ENCODE measurements at regions of chr12 and their contacts with region 1.

Region 1: GRCh38 chr12:31362759-31363415 is 36.9 kb upstream of the SINHCAF start:
- DNase-seq: peak; percentile 60
- ATAC-seq: peak; percentile 80
- H3K4me3 ChIP-seq: peak overlapping the region in 2 of 5 experiments; percentile 19 to 25
- H3K4me3 Mint-ChIP-seq: peak overlapping the region; percentile 59
- H3K27ac ChIP-seq: peak overlapping the region in 1 of 2 donors; percentile 7
- H3K27ac Mint-ChIP-seq: peak overlapping the region; percentile 46
- H3K4me1 ChIP-seq: peaks cover 16 to 21% of the 10 kb centered on the region in 2 donors
- H3K4me1 Mint-ChIP-seq: peaks cover 22% of the 10 kb centered on the region
- H3K27me3 ChIP-seq: no peaks in the 10 kb centered on the region
- H3K27me3 Mint-ChIP-seq: no peaks in the 10 kb centered on the region
- CTCF ChIP-seq: no peak

Region 2: DNA sequence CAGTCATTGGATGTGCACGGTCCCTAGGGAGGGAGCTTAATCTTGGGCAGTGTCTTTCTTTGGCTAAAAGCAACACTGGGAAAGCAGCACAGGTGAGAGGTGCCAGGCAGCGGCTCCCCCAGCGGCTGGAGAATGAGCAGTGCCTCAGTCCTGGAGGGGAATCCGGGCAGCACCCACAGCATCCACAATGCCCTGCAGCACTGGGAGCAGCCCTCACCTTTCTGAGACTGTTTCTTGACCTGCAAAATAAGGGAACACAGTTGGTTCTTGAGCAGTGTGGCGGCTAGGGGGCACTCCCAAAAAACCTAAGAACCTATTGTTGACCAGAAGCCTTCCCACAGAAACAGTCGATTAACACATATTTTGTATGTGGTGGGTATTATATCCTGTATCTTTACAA is 112.7 kb before region 1 on chr12:
- CTCF ChIA-PET with region 1: interaction called, 18 read pairs
- POLR2A ChIA-PET with region 1: no interaction called
- intact Hi-C with region 1: loop called (anchors 2 kb)
- DNase-seq: no peak
- ATAC-seq: no peak
- H3K4me3 ChIP-seq: no peak overlapping the region
- H3K4me3 Mint-ChIP-seq: no peak overlapping the region
- H3K27ac ChIP-seq: no peak overlapping the region
- H3K27ac Mint-ChIP-seq: no peak overlapping the region
- H3K4me1 ChIP-seq: no peaks in the 10 kb centered on the region
- H3K4me1 Mint-ChIP-seq: no peaks in the 10 kb centered on the region
- H3K27me3 ChIP-seq: peaks cover 0 to 2% (median 0%) of the 10 kb centered on the region in 4 experiments
- H3K27me3 Mint-ChIP-seq: no peaks in the 10 kb centered on the region
- CTCF ChIP-seq: no peak

Region 3: GRCh38 chr12:31325877-31326631 is 36.8 kb before region 1 on chr12 and contains the start of gene SINHCAF:
- CTCF ChIA-PET with region 1: interaction called, 4 read pairs
- POLR2A ChIA-PET with region 1: interaction called, 4 read pairs
- intact Hi-C with region 1: loop called (anchors 2 kb)
- DNase-seq: peak; percentile 99
- ATAC-seq: peak; percentile 64
- H3K4me3 ChIP-seq: peak within 1 kb of the TSS; percentile 70 to 96 (median 93)
- H3K4me3 Mint-ChIP-seq: peak within 1 kb of the TSS; percentile 98
- H3K27ac ChIP-seq: peak within 1 kb of the TSS; percentile 97
- H3K27ac Mint-ChIP-seq: peak within 1 kb of the TSS; percentile 99
- H3K4me1 ChIP-seq: peaks cover 27 to 36% of the 10 kb centered on the region in 2 donors
- H3K4me1 Mint-ChIP-seq: peaks cover 39% of the 10 kb centered on the region
- H3K27me3 ChIP-seq: no peaks in the 10 kb centered on the region
- H3K27me3 Mint-ChIP-seq: no peaks in the 10 kb centered on the region
- CTCF ChIP-seq: no peak
- total RNA-seq, gene SINHCAF: 127 and 129 TPM in 2 replicates